Right lobe of liver (tissue), 6 donors: ENCODE measurements at regions of chr9 and their contacts with region 1.

Region 1: GRCh38 chr9:68714416-68715180 is 9.6 kb downstream of the PIP5K1B start:
- DNase-seq: no peak
- ATAC-seq: no peak
- H3K4me3 ChIP-seq: no peak overlapping the region
- H3K27ac ChIP-seq: no peak overlapping the region
- H3K4me1 ChIP-seq: no peaks in the 10 kb centered on the region
- H3K27me3 ChIP-seq: no peaks in the 10 kb centered on the region
- CTCF ChIP-seq: no peak
- POLR2A ChIP-seq: no peak

Region 2: GRCh38 chr9:68779558-68780384 is 65.2 kb after region 1 on chr9:
- intact Hi-C with region 1: loop called in 1 of 2 experiments (anchors 10 kb)
- DNase-seq: peak; percentile 94 to 95 (median 94)
- ATAC-seq: peak; percentile 92 to 96 (median 93)
- H3K4me3 ChIP-seq: peak overlapping the region; percentile 78 to 83 (median 79)
- H3K27ac ChIP-seq: peak overlapping the region; percentile 80 to 88 (median 81)
- H3K4me1 ChIP-seq: peaks cover 0 to 34% (median 9%) of the 10 kb centered on the region in 4 donors
- H3K27me3 ChIP-seq: no peaks in the 10 kb centered on the region
- CTCF ChIP-seq: peak in 3 of 4 donors; percentile 29 to 42 (median 42)
- POLR2A ChIP-seq: peak; percentile 90

Region 3: DNA sequence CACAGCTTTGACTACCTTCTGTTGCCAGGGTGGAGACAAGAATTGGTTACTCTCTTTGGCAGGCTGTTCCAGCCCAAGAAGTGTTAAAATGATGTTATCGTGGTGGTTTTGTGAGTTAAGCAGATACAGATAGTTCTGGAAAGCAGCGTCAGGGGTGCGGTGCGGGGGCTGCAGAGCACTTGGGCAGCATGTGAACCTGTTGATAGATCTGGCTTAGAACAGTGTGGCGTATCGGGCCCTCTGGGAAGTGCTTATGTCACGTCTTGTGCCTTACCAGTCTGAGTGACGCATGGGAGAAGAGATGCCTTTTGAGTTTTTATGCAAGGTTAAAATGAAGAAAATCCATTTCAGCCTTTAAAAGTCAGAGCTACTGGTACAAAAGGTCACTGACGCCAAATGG is 146.8 kb after region 1 on chr9:
- intact Hi-C with region 1: no loop called
- DNase-seq: no peak
- ATAC-seq: no peak
- H3K4me3 ChIP-seq: no peak overlapping the region
- H3K27ac ChIP-seq: no peak overlapping the region
- H3K4me1 ChIP-seq: no peaks in the 10 kb centered on the region
- H3K27me3 ChIP-seq: no peaks in the 10 kb centered on the region
- CTCF ChIP-seq: no peak
- POLR2A ChIP-seq: no peak

Region 4: GRCh38 chr9:69155341-69156030 is 440.9 kb after region 1 on chr9:
- intact Hi-C with region 1: no loop called
- DNase-seq: no peak
- ATAC-seq: peak; percentile 13 to 65 (median 48)
- H3K4me3 ChIP-seq: no peak overlapping the region
- H3K27ac ChIP-seq: peak overlapping the region in 1 of 3 donors; percentile 41
- H3K4me1 ChIP-seq: peaks cover 0 to 45% (median 21%) of the 10 kb centered on the region in 4 donors
- H3K27me3 ChIP-seq: no peaks in the 10 kb centered on the region
- CTCF ChIP-seq: no peak
- POLR2A ChIP-seq: no peak